Thyroid gland (tissue), 4 donors: ENCODE measurements at regions of chr4 and their contacts with region 1.

Region 1: GRCh38 chr4:108512615-108513505 is 107.5 kb upstream of the RPL34 start:
- DNase-seq: peak; percentile 54 to 66
- H3K4me3 ChIP-seq: no peak overlapping the region
- H3K27ac ChIP-seq: no peak overlapping the region
- H3K4me1 ChIP-seq: no peaks in the 10 kb centered on the region
- H3K27me3 ChIP-seq: no peaks in the 10 kb centered on the region
- CTCF ChIP-seq: peak in 3 of 6 experiments; percentile 37 to 49 (median 38)
- POLR2A ChIP-seq: no peak

Region 2: DNA sequence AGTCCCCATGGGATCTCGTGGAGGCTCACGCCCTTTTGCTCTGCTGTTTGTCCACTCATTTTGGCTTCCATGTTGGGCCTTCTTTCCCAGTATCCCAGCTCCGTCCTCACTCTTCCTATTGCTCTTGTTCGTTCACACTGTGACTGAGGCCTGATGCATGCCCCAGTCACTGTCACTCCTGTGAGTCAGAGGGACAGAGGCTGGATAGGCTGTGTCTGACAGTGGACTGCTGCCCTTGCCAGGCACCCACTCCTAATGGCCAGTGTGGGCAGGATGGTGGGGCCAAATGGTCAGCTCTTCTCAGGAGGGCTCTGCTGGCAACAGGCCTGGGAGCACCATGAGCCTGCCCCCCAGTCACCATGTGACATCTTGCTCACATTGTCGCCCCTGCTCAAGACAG is 483.1 kb before region 1 on chr4:
- intact Hi-C with region 1: loop called (anchors 10 kb)
- DNase-seq: no peak
- H3K4me3 ChIP-seq: no peak overlapping the region
- H3K27ac ChIP-seq: no peak overlapping the region
- H3K4me1 ChIP-seq: no peaks in the 10 kb centered on the region
- H3K27me3 ChIP-seq: no peaks in the 10 kb centered on the region
- CTCF ChIP-seq: no peak
- POLR2A ChIP-seq: no peak